Naive thymus-derived CD4-positive, alpha-beta T cell (primary cell): ENCODE measurements at regions of chr9 and their contacts with region 1.

Region 1: DNA sequence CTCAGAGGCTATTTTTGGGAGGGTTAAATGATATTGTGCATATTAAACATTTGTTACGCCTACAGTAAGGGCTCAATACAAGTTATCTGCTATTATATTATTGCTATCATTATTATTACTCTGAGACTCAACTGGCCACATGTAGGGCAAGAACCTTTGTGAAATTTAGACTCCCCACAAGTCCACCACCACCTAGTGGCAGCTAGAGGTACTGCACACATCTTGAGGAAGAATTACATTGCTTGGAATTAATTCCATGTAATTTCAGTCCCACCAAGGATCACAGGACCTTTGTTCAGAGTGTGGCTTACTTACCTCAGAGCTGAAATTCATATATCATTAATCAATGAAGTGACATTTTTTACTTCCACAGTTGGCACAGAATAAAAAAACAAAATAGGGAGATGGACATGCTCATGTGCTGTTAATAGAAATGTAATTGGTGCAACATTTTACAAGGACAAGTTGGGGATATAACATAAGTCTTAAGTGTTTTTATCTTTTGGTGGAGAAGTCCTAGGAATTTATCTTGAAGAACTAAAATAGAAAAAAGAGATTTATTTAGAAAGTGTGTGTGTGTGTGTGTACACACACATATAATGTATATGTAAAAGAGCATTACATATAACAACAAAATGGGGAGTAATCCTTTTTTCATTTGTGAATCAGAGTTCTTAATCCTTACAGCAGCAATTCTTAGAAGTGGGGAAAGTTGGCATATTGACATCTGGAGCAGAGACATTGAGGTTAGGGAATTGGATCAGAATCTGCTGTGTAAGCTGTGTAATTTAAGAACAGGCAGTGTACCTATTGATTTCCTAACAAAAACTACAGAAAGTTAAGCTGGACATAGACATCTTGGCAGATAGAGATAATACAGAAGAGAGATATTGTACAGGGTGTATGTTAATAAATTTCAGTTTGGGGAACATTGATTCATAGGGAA is 11.2 kb downstream of the MSANTD3 start:
- DNase-seq: peak; percentile 22 to 68 (median 52)
- ATAC-seq: peak; percentile 81
- H3K4me3 ChIP-seq: no peak overlapping the region
- H3K4me3 Mint-ChIP-seq: no peak overlapping the region
- H3K27ac ChIP-seq: no peak overlapping the region
- H3K27ac Mint-ChIP-seq: no peak overlapping the region
- H3K4me1 ChIP-seq: no peaks in the 10 kb centered on the region
- H3K4me1 Mint-ChIP-seq: peaks cover 0 to 13% (median 3%) of the 10 kb centered on the region in 7 donors
- H3K27me3 ChIP-seq: no peaks in the 10 kb centered on the region
- H3K27me3 Mint-ChIP-seq: no peaks in the 10 kb centered on the region

Region 2: GRCh38 chr9:99184475-99185347 is 1253.4 kb before region 1 on chr9:
- CTCF ChIA-PET with region 1: interaction called, 3 read pairs
- POLR2A ChIA-PET with region 1: no interaction called
- intact Hi-C with region 1: loop called in 1 of 2 experiments (anchors 1 kb)
- DNase-seq: peak; percentile 50 to 75 (median 72)
- ATAC-seq: peak; percentile 91
- H3K4me3 ChIP-seq: no peak overlapping the region
- H3K4me3 Mint-ChIP-seq: peak overlapping the region in 7 of 10 donors; percentile 43 to 73 (median 50)
- H3K27ac ChIP-seq: no peak overlapping the region
- H3K27ac Mint-ChIP-seq: peak overlapping the region in 4 of 9 donors; percentile 40 to 69 (median 52)
- H3K4me1 ChIP-seq: peaks cover 0 to 3% of the 10 kb centered on the region in 2 donors
- H3K4me1 Mint-ChIP-seq: peaks cover 0 to 43% (median 19%) of the 10 kb centered on the region in 7 donors
- H3K27me3 ChIP-seq: peaks cover 0 to 3% of the 10 kb centered on the region in 2 donors
- H3K27me3 Mint-ChIP-seq: peaks cover 0 to 18% (median 7%) of the 10 kb centered on the region in 5 donors

Region 3: GRCh38 chr9:100028201-100028784 is 409.8 kb before region 1 on chr9:
- CTCF ChIA-PET with region 1: interaction called, 3 read pairs
- POLR2A ChIA-PET with region 1: no interaction called
- intact Hi-C with region 1: loop called (anchors 1 to 2 kb)
- DNase-seq: peak; percentile 21 to 66 (median 45)
- ATAC-seq: peak; percentile 98
- H3K4me3 ChIP-seq: no peak overlapping the region
- H3K4me3 Mint-ChIP-seq: no peak overlapping the region
- H3K27ac ChIP-seq: no peak overlapping the region
- H3K27ac Mint-ChIP-seq: peak overlapping the region in 1 of 9 donors; percentile 0
- H3K4me1 ChIP-seq: no peaks in the 10 kb centered on the region
- H3K4me1 Mint-ChIP-seq: peaks cover 4 to 12% (median 9%) of the 10 kb centered on the region in 7 donors
- H3K27me3 ChIP-seq: no peaks in the 10 kb centered on the region
- H3K27me3 Mint-ChIP-seq: no peaks in the 10 kb centered on the region

Region 4: DNA sequence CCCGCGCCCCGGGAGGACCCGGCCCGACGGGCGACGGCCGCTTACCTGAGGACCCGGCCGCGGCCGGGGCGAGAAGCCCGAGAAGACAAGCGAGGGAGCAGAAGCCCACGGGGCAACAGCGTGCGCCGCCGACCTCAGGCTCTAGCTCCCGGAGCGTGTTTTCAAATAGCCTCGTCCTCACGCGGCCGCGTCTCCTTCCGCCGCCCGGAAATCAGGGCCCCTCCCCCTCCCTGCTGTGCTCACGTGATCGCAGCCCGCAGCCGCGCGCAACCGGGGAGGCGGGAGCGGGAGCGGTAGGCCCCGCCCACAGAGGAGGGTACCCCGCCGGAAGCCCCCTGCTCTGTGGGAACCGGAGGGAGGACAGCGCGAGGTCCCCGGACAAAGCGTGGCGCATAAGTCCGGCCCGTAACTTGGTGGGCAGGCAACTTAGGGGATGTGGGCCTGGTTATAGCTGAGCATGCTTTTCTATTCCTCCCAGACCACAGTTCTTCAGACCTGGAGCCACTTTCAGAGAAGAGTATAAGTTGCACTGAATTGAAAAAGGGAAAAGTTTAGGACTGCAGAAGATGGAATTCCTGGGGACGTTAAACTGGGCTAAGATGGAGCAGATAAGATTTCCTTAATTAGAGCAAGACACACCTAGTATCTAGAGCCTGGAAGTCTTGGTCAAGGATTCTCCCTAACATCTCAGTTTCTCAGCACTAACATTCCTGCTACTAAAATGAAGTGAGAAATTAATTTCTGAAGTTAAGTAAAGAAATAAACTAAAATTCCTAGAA is 85.2 kb before region 1 on chr9 and contains the start of gene TEX10:
- CTCF ChIA-PET with region 1: no interaction called
- POLR2A ChIA-PET with region 1: no interaction called
- intact Hi-C with region 1: loop called in 1 of 2 experiments (anchors 1 kb)
- DNase-seq: peak; percentile 80 to 94 (median 87)
- ATAC-seq: peak; percentile 96
- H3K4me3 ChIP-seq: peak within 1 kb of the TSS; percentile 79
- H3K4me3 Mint-ChIP-seq: peak within 1 kb of the TSS; percentile 87 to 99 (median 94)
- H3K27ac ChIP-seq: peak within 1 kb of the TSS; percentile 82
- H3K27ac Mint-ChIP-seq: peak within 1 kb of the TSS; percentile 77 to 94 (median 86)
- H3K4me1 ChIP-seq: peaks cover 8 to 22% of the 10 kb centered on the region in 2 donors
- H3K4me1 Mint-ChIP-seq: peaks cover 32 to 62% (median 53%) of the 10 kb centered on the region in 7 donors
- H3K27me3 ChIP-seq: no peaks in the 10 kb centered on the region
- H3K27me3 Mint-ChIP-seq: no peaks in the 10 kb centered on the region
- total RNA-seq, gene TEX10: 11.0 to 24.6 (median 18.2) TPM

Region 5: DNA sequence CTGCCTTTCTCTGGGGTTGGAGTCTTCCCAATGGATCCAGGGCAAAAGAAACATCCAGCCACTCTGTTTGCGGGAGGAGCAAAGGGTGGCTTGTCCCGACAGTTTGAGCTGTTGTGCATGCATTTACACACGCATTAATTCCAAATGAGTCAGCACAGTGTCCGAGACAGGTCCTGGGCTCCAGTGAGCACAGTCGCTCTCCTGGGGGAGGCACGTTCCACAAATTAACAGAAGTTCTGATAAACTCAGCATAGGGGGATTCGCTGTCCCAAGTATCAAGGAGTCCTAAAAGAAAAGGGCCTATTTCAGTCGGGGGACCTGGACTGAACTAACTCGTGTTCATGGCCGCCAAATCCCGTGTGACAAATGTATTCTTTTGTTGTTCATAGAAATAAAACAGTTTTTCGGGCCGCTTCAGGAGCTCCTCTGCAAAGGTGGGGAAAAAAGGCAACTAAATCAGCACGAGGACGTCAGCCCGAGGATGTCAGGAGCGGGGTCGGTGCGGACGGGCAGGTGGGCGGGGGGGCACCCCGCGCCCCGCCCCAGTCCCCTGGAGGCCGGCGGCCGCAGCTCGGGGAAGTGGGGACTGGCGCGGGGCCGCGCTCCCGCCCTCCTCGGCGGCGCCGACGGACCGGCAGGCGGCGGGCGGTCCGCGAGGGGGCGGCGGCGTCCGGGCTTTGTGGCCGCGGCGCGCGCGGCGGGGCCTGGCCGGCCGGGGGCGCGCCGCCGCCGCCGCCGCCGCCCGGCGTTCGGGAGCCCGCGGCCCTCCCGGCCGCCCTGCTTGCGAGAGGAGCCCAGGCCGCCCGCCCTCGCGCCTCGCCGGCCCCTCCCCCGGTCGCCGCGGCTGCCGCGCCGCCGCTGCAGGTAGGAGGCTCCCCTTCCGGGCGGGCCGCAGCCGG is 11.4 kb before region 1 on chr9 and contains the start of gene MSANTD3:
- CTCF ChIA-PET with region 1: interaction called, 3 read pairs
- POLR2A ChIA-PET with region 1: no interaction called
- intact Hi-C with region 1: loop called in 1 of 2 experiments (anchors 1 kb)
- DNase-seq: peak; percentile 22 to 67 (median 44)
- ATAC-seq: peak; percentile 87
- H3K4me3 ChIP-seq: peak within 1 kb of the TSS; percentile 73
- H3K4me3 Mint-ChIP-seq: peak within 1 kb of the TSS; percentile 90 to 99 (median 96)
- H3K27ac ChIP-seq: peak within 1 kb of the TSS; percentile 68
- H3K27ac Mint-ChIP-seq: peak within 1 kb of the TSS; percentile 84 to 98 (median 93)
- H3K4me1 ChIP-seq: peaks cover 7 to 8% of the 10 kb centered on the region in 2 donors
- H3K4me1 Mint-ChIP-seq: peaks cover 22 to 48% (median 42%) of the 10 kb centered on the region in 7 donors
- H3K27me3 ChIP-seq: no peaks in the 10 kb centered on the region
- H3K27me3 Mint-ChIP-seq: peaks cover 0 to 18% (median 2%) of the 10 kb centered on the region in 5 donors
- total RNA-seq, gene MSANTD3: 6.8 to 13.4 (median 12.0) TPM

Region 6: DNA sequence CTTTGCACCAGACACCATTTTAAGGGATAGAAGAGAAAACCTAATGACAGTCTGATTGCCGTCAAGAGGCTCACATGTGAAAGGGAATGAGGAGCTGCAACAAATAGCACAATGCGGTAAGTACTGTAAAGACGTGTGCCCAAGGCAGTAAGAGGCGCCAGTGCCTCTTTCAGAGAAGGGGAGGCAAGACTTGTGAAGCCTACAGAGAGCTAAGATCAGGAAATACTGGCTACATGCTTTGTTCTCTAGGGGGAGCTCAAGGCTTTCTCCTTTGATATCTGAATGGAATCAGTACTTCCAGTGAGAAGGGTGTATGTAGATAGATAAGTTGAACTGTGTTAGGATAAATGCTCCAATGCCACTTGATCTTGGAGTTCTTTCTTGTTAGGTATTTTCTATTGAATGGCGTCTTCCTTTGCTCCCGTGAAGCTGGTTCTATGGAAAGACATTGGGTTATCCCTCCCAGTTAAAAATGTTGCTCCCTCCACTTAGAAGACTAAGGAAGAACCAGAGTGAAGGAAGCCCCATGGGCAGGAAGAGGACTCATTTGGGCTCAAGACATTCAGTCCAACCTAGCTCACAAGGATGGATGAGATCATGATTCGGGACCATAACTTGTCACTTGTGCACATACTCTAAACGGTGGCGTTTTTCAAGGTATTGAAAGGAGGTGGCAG is 1021.0 kb after region 1 on chr9:
- CTCF ChIA-PET with region 1: no interaction called
- POLR2A ChIA-PET with region 1: no interaction called
- intact Hi-C with region 1: no loop called
- DNase-seq: peak in 7 of 9 donors; percentile 9 to 49 (median 27)
- ATAC-seq: peak; percentile 84
- H3K4me3 ChIP-seq: no peak overlapping the region
- H3K4me3 Mint-ChIP-seq: no peak overlapping the region
- H3K27ac ChIP-seq: no peak overlapping the region
- H3K27ac Mint-ChIP-seq: no peak overlapping the region
- H3K4me1 ChIP-seq: no peaks in the 10 kb centered on the region
- H3K4me1 Mint-ChIP-seq: peaks cover 0 to 2% (median 0%) of the 10 kb centered on the region in 7 donors
- H3K27me3 ChIP-seq: no peaks in the 10 kb centered on the region
- H3K27me3 Mint-ChIP-seq: peaks cover 8 to 26% (median 17%) of the 10 kb centered on the region in 5 donors